B cell (primary cell): ENCODE measurements at regions of chr15 and their contacts with region 1.

Region 1: DNA sequence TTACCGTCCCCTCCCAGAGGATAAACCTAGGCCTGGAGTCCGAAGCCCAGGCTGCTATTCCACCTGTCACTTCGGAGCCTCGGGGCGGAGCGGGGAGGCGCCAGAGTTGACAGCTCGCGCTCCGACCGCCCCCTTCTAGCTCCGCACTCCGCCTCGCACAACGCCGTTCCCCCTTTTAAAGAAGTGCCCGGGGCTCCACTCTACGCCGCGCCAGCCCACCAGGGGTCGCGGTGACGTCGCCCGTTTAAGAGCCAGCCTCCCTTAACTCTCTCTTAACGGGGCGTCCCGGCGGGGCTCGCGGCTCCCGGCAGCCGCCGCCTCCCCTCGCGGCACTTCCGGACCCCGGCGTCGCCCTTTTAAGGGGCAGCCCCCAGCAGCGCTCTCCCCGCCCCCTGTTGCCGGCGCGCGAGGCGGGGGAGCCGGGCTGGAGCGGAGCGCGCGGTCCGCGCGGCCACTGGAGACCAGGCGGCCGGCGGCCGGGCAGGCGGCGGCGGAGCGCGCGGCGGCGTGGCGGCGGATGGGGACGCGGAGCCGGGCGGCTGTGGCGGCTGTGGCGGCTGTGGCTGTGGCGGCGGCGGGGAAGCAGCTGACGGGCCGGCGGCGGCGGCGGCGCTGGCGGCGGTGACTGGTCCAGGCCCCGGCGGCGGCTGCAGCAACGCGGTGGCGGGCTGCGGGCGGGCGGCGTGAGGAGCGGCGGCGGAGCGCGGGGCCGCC is at the start of gene INAFM2:
- DNase-seq: peak; percentile 97
- ATAC-seq: peak; percentile 89
- H3K4me3 ChIP-seq: peak within 1 kb of the TSS; percentile 25 to 71 (median 59)
- H3K4me3 Mint-ChIP-seq: peak within 1 kb of the TSS; percentile 85
- H3K27ac ChIP-seq: peak within 1 kb of the TSS in 1 of 2 donors; percentile 10
- H3K27ac Mint-ChIP-seq: no peak within 1 kb of the TSS
- H3K4me1 ChIP-seq: peaks cover 21 to 26% of the 10 kb centered on the region in 2 donors
- H3K4me1 Mint-ChIP-seq: peaks cover 29% of the 10 kb centered on the region
- H3K27me3 ChIP-seq: peaks cover 0 to 2% (median 0%) of the 10 kb centered on the region in 4 experiments
- H3K27me3 Mint-ChIP-seq: no peaks in the 10 kb centered on the region
- CTCF ChIP-seq: peak; percentile 75
- total RNA-seq, gene INAFM2: 5.3 and 7.0 TPM in 2 replicates

Region 2: GRCh38 chr15:40044717-40045571 is 278.5 kb before region 1 on chr15:
- CTCF ChIA-PET with region 1: interaction called, 3 read pairs
- POLR2A ChIA-PET with region 1: no interaction called
- intact Hi-C with region 1: loop called (anchors 5 kb)
- DNase-seq: peak; percentile 90
- ATAC-seq: peak; percentile 94
- H3K4me3 ChIP-seq: peak overlapping the region in 2 of 5 experiments; percentile 26 to 34
- H3K4me3 Mint-ChIP-seq: peak overlapping the region; percentile 52
- H3K27ac ChIP-seq: peak overlapping the region; percentile 65 to 69
- H3K27ac Mint-ChIP-seq: peak overlapping the region; percentile 86
- H3K4me1 ChIP-seq: peaks cover 57 to 64% of the 10 kb centered on the region in 2 donors
- H3K4me1 Mint-ChIP-seq: peaks cover 62% of the 10 kb centered on the region
- H3K27me3 ChIP-seq: no peaks in the 10 kb centered on the region
- H3K27me3 Mint-ChIP-seq: no peaks in the 10 kb centered on the region
- CTCF ChIP-seq: peak; percentile 97

Region 3: GRCh38 chr15:40307421-40308211 is 15.8 kb before region 1 on chr15 and contains the start of gene PLCB2:
- CTCF ChIA-PET with region 1: interaction called, 122 read pairs
- POLR2A ChIA-PET with region 1: interaction called, 14 read pairs
- intact Hi-C with region 1: loop called (anchors 1 kb)
- DNase-seq: peak; percentile 84
- ATAC-seq: peak; percentile 79
- H3K4me3 ChIP-seq: peak within 1 kb of the TSS; percentile 81 to 98 (median 90)
- H3K4me3 Mint-ChIP-seq: peak within 1 kb of the TSS; percentile 98
- H3K27ac ChIP-seq: peak within 1 kb of the TSS; percentile 77 to 96
- H3K27ac Mint-ChIP-seq: peak within 1 kb of the TSS; percentile 99
- H3K4me1 ChIP-seq: peaks cover 25 to 36% of the 10 kb centered on the region in 2 donors
- H3K4me1 Mint-ChIP-seq: peaks cover 48% of the 10 kb centered on the region
- H3K27me3 ChIP-seq: no peaks in the 10 kb centered on the region
- H3K27me3 Mint-ChIP-seq: no peaks in the 10 kb centered on the region
- CTCF ChIP-seq: peak; percentile 59
- total RNA-seq, gene PLCB2: 155 and 166 TPM in 2 replicates

Region 4: DNA sequence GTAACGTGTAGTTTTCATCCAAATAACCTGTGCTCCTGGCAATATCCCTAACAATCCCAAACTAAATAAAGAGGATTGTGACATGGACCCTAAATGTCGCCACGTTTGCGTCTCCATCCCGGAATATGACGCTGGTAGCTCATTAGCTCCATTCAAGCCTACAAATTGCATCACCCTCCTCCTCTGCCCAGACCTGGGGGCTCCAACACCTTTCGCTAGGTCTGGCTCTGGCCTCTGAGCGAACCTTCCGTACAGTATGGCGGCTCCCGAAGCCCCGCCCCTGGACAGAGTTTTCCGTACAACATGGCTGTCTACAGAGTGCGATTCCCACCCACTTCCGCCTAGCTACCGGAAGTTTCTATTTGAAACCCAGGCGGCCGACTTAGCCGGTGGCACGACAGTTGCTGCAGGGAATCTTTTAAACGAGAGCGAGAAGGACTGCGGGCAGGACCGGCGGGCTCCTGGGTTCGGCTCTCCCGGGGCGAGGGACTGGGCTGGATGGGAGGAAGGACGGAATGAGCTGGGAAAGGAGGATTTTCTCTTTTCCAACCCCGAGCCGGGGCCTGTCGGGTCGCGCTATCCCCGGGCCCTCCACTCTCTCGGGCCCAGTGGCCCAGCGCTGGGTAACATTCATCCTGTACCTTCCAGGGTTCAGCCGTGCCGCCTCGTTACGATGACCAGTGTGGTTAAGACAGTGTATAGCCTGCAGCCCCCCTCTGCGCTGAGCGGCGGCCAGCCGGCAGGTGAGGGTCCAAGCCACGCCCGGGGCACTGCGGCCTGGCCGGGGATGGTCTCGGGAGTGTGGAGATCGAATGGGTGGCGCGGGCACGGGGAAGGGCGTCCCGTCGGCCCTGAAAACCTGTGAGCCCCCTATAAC is 59.4 kb after region 1 on chr15 and contains the start of gene KNSTRN:
- CTCF ChIA-PET with region 1: interaction called, 4 read pairs
- POLR2A ChIA-PET with region 1: no interaction called
- intact Hi-C with region 1: loop called (anchors 2 kb)
- DNase-seq: peak; percentile 93
- ATAC-seq: peak; percentile 100
- H3K4me3 ChIP-seq: peak within 1 kb of the TSS; percentile 53 to 89 (median 84)
- H3K4me3 Mint-ChIP-seq: peak within 1 kb of the TSS; percentile 98
- H3K27ac ChIP-seq: peak within 1 kb of the TSS in 1 of 2 donors; percentile 40
- H3K27ac Mint-ChIP-seq: peak within 1 kb of the TSS; percentile 82
- H3K4me1 ChIP-seq: peaks cover 6 to 13% of the 10 kb centered on the region in 2 donors
- H3K4me1 Mint-ChIP-seq: peaks cover 12% of the 10 kb centered on the region
- H3K27me3 ChIP-seq: no peaks in the 10 kb centered on the region
- H3K27me3 Mint-ChIP-seq: no peaks in the 10 kb centered on the region
- CTCF ChIP-seq: no peak
- total RNA-seq, gene KNSTRN: 12.6 and 14.0 TPM in 2 replicates